ENCODE measurements at regions of chr1 and their contacts with region 1.

Region 1: DNA sequence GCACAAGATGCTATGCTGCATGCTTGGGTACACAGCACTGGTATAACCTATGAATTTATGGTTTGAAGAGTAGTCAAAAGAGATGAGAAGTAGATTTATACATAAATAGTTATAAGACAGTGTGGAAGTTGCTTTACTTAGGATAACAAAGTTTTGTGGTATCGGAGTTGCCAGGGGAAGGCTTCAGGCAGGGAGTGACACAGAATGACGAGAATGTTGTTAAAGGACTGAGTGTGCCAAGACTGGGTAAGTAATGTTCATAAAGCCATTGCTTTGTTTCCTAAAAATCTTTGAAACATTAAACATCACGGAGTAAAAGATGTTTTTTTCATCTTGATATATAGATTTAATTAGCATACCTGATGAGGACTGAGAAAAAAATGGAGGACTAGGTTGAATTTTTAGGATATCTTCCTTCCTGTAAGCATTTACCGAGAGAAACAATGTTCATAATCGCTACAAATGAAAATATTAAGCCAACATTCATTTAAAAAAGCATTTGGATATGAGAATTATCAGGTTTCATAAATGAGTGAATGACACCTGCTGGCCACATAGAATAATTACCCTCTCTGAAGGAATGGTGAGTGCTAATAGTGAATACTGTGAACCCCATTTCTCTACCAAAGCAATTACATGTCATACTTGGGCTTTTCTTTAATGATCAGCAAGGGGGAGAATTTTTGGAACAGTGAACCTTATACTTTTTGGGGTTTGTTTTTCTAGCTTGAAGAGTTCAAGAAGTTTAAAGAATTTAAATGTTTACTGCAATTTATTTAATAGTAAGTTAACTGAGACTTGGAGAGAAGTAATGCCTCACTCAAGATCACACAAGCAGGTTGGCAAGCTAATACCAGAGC is 28.4 kb downstream of the EXTL2 start:
- DNase-seq: no peak
- ATAC-seq: peak in 1 of 4 donors; percentile 51
- H3K4me3 ChIP-seq: no peak overlapping the region
- H3K27ac ChIP-seq: no peak overlapping the region
- H3K4me1 ChIP-seq: no peaks in the 10 kb centered on the region
- H3K27me3 ChIP-seq: peaks cover 0 to 4% (median 0%) of the 10 kb centered on the region in 3 donors
- CTCF ChIP-seq: peak; percentile 57

Region 2: DNA sequence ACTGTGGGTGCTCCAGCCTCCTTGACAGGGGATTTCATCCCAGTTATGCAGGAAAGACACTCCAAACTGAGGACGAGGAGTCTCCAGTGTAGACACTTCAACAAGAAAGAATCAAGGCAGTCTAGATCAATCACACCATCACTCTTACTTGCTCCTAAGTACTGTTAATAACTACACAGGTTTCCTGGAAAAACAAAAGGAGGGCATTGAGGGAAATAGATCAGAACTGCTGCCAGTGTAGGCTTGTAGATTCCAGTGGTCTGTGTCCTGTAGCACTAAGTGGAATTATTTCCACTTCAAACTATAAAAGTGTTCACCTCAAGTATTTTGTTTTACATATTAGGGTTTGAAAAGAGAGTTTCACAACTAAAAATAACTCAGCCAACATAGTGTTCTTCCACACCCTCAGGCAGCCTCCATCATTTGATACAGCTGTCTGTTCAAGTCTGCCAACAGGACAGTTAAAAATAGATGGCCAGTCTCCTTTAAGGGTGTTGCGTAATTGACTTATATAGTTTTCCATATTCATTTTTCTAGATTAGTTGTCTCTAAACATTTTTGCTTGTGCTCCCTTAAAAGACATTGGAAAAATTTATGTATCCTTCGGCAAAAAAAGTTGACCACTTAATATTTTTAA is 1048.1 kb before region 1 on chr1:
- intact Hi-C with region 1: loop called in 1 of 2 experiments (anchors 5 kb)
- DNase-seq: no peak
- ATAC-seq: peak; percentile 91 to 95 (median 94)
- H3K4me3 ChIP-seq: no peak overlapping the region
- H3K27ac ChIP-seq: peak overlapping the region; percentile 78
- H3K4me1 ChIP-seq: peaks cover 29% of the 10 kb centered on the region
- H3K27me3 ChIP-seq: no peaks in the 10 kb centered on the region
- CTCF ChIP-seq: no peak

Region 3: GRCh38 chr1:100459358-100460114 is 406.7 kb before region 1 on chr1:
- intact Hi-C with region 1: loop called (anchors 5 kb)
- DNase-seq: peak; percentile 68 to 82
- ATAC-seq: peak; percentile 90 to 98 (median 94)
- H3K4me3 ChIP-seq: no peak overlapping the region
- H3K27ac ChIP-seq: peak overlapping the region; percentile 33
- H3K4me1 ChIP-seq: peaks cover 3% of the 10 kb centered on the region
- H3K27me3 ChIP-seq: no peaks in the 10 kb centered on the region
- CTCF ChIP-seq: peak; percentile 90

Region 4: DNA sequence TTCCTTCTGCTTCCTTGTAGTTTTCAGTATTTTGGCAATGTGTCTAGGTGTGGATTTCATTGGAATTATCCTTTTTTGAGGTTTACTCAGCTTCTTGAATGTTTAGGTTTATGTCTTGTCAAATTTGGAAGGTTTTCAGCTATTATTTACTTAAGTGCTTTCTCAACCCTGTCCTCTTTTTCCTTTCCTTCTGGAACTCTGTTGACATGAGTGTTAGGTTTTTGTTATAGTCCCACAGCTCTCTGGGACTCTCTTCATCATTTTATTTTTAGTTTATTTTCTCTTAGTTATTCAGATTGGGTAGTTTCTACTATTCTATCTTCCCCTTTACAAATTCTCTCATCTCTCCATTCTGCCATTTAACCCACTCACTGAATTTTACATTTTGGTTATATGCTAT is 391.4 kb before region 1 on chr1:
- intact Hi-C with region 1: loop called in 1 of 2 experiments (anchors 5 kb)
- DNase-seq: no peak
- ATAC-seq: no peak
- H3K4me3 ChIP-seq: no peak overlapping the region
- H3K27ac ChIP-seq: no peak overlapping the region
- H3K4me1 ChIP-seq: peaks cover 5% of the 10 kb centered on the region
- H3K27me3 ChIP-seq: no peaks in the 10 kb centered on the region
- CTCF ChIP-seq: no peak

Region 5: DNA sequence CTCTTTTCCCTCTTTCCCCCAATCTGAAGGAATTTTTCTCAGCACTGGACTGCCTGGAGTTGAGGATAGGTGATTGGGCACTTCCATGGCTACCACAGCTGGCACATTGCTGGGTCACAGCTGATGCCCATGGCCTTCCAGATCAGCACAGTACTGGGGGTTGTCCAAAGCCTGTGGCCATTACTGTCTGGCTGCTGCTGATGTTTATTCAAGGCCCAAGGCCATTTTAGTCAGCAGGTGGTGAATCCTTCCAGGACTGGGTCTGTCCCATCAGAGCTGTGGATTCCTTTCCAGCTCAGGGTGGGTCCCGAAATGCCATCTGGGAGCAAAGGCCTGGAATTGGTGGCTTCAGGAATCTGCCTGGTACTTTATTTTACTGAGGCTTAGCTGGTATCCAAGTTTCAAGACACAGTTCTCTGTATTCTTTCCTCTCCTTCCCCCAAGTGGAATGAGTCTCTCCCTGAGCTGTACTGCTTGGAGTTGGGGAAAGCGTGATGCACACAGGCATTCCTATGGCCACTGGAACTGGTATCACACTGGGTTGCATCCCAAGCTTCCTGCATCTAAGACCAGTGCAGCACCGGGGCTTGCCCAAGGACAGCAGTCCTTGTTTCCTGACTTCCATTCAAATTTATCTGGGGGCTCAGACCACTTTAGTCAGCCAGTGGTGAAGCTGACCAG is 309.2 kb before region 1 on chr1:
- intact Hi-C with region 1: no loop called
- DNase-seq: no peak
- ATAC-seq: no peak
- H3K4me3 ChIP-seq: no peak overlapping the region
- H3K27ac ChIP-seq: no peak overlapping the region
- H3K4me1 ChIP-seq: no peaks in the 10 kb centered on the region
- H3K27me3 ChIP-seq: peaks cover 0 to 2% (median 0%) of the 10 kb centered on the region in 3 donors
- CTCF ChIP-seq: no peak

Region 6: DNA sequence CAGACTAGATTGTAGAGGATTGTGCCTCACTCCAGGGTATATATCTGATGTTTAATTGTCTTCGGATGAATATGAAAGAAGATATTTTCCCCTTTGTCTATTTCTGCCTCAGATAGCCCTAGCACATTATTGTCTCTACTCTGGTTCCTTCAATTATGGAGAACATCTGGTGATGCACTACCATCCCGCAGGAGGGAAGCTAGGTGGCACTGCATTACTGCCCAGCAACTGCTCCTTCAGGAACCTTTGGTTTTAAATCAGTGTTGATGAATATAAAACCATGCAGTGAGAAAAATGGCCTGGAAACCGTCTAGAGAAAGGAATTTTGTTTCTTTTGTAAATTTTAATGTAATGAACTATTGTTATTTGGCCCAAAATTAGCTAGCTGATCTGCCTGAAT is 259.8 kb before region 1 on chr1:
- intact Hi-C with region 1: loop called in 1 of 2 experiments (anchors 5 kb)
- DNase-seq: peak in 1 of 2 donors; percentile 21
- ATAC-seq: no peak
- H3K4me3 ChIP-seq: no peak overlapping the region
- H3K27ac ChIP-seq: no peak overlapping the region
- H3K4me1 ChIP-seq: no peaks in the 10 kb centered on the region
- H3K27me3 ChIP-seq: no peaks in the 10 kb centered on the region
- CTCF ChIP-seq: peak; percentile 42

Region 7: GRCh38 chr1:100760511-100760910 is 105.8 kb before region 1 on chr1:
- intact Hi-C with region 1: no loop called
- DNase-seq: no peak
- ATAC-seq: no peak
- H3K4me3 ChIP-seq: no peak overlapping the region
- H3K27ac ChIP-seq: no peak overlapping the region
- H3K4me1 ChIP-seq: no peaks in the 10 kb centered on the region
- H3K27me3 ChIP-seq: no peaks in the 10 kb centered on the region
- CTCF ChIP-seq: no peak

Measured in psoas muscle (tissue), 8 donors.